GM12878 (cell line): ENCODE measurements at regions of chr3 and their contacts with region 1.

Region 1: GRCh38 chr3:128133273-128134084 is 9.9 kb upstream of the RUVBL1 start:
- DNase-seq: no peak
- ATAC-seq: peak; percentile 88
- H3K4me3 ChIP-seq: no peak overlapping the region
- H3K27ac ChIP-seq: no peak overlapping the region
- H3K4me1 ChIP-seq: no peaks in the 10 kb centered on the region
- H3K27me3 ChIP-seq: no peaks in the 10 kb centered on the region
- CTCF ChIP-seq: peak; percentile 63 to 77 (median 66)
- EP300 ChIP-seq: no peak
- POLR2A ChIP-seq: no peak
- RAD21 ChIP-seq: peak; percentile 78

Region 2: GRCh38 chr3:128075516-128076482 is 57.7 kb before region 1 on chr3:
- CTCF ChIA-PET with region 1: interaction called, 13 read pairs
- POLR2A ChIA-PET with region 1: no interaction called
- RAD21 ChIA-PET with region 1: no interaction called
- SMC1A ChIA-PET with region 1: no interaction called
- in situ Hi-C with region 1: no loop called
- intact Hi-C with region 1: loop called (anchors 2 kb)
- DNase-seq: no peak
- ATAC-seq: peak; percentile 92
- H3K4me3 ChIP-seq: peak overlapping the region; percentile 57; the same call in 1 of the 2 replicates
- H3K27ac ChIP-seq: no peak overlapping the region
- H3K4me1 ChIP-seq: peaks cover 4% of the 10 kb centered on the region
- H3K27me3 ChIP-seq: no peaks in the 10 kb centered on the region
- CTCF ChIP-seq: peak; percentile 87 to 95 (median 92)
- EP300 ChIP-seq: no peak
- POLR2A ChIP-seq: no peak; the same call in 1 of the 2 replicates
- RAD21 ChIP-seq: peak; percentile 52

Region 3: GRCh38 chr3:128144512-128145187 is 11.2 kb after region 1 on chr3:
- CTCF ChIA-PET with region 1: interaction called, 12 read pairs
- POLR2A ChIA-PET with region 1: no interaction called
- RAD21 ChIA-PET with region 1: no interaction called
- SMC1A ChIA-PET with region 1: no interaction called
- in situ Hi-C with region 1: no loop called
- intact Hi-C with region 1: no loop called
- DNase-seq: no peak
- ATAC-seq: no peak
- H3K4me3 ChIP-seq: no peak overlapping the region
- H3K27ac ChIP-seq: no peak overlapping the region
- H3K4me1 ChIP-seq: no peaks in the 10 kb centered on the region
- H3K27me3 ChIP-seq: no peaks in the 10 kb centered on the region
- CTCF ChIP-seq: no peak
- EP300 ChIP-seq: no peak
- POLR2A ChIP-seq: no peak
- RAD21 ChIP-seq: no peak

Region 4: GRCh38 chr3:128170805-128171516 is 37.5 kb after region 1 on chr3:
- CTCF ChIA-PET with region 1: no interaction called
- POLR2A ChIA-PET with region 1: no interaction called
- RAD21 ChIA-PET with region 1: no interaction called
- SMC1A ChIA-PET with region 1: no interaction called
- in situ Hi-C with region 1: no loop called
- intact Hi-C with region 1: no loop called
- DNase-seq: no peak
- ATAC-seq: no peak
- H3K4me3 ChIP-seq: no peak overlapping the region
- H3K27ac ChIP-seq: no peak overlapping the region
- H3K4me1 ChIP-seq: no peaks in the 10 kb centered on the region
- H3K27me3 ChIP-seq: no peaks in the 10 kb centered on the region
- CTCF ChIP-seq: peak in 2 of 3 experiments; percentile 14 to 16; a peak in 3 of 6 replicates
- EP300 ChIP-seq: no peak
- POLR2A ChIP-seq: no peak
- RAD21 ChIP-seq: peak; percentile 58

Region 5: DNA sequence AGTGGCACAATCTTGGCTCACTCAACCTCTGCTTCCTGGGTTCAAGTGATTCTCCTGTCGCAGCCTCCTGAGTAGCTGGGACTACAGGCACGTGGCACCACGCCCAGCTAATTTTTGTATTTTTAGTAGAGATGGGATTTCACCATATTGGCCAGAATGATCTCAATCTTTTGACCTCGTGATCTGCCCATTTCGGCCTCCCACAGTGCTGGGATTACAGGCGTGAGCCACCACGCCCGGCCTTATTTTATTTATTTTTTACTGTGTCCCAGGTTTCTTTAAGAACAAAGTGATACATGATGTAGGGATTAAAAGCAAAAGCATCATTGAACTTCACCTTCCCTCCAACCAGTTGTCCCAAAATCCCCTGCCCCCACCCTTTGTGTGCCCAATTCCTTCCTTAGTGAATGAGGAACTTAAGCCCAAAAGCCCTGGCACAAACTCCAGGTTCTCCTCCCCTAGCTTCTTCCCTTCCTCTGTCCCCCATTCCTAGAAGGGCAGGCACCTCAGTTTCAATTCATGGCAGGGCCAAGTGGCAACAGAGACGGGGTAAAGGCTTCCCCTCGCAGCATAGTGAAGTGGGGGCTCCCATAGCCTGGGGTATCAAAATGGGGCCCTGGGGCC is 540.8 kb after region 1 on chr3:
- CTCF ChIA-PET with region 1: no interaction called
- POLR2A ChIA-PET with region 1: no interaction called
- RAD21 ChIA-PET with region 1: no interaction called
- SMC1A ChIA-PET with region 1: no interaction called
- in situ Hi-C with region 1: no loop called
- intact Hi-C with region 1: no loop called
- DNase-seq: no peak
- ATAC-seq: no peak
- H3K4me3 ChIP-seq: peak overlapping the region; percentile 72
- H3K27ac ChIP-seq: peak overlapping the region; percentile 92
- H3K4me1 ChIP-seq: peaks cover 12% of the 10 kb centered on the region
- H3K27me3 ChIP-seq: no peaks in the 10 kb centered on the region
- CTCF ChIP-seq: no peak
- EP300 ChIP-seq: no peak
- POLR2A ChIP-seq: no peak
- RAD21 ChIP-seq: no peak